Activated B cell treated with CpG ODN at 0.5 μM for 24 hours (primary cell): ENCODE measurements at regions of chr15 and their contacts with region 1.

Region 1: DNA sequence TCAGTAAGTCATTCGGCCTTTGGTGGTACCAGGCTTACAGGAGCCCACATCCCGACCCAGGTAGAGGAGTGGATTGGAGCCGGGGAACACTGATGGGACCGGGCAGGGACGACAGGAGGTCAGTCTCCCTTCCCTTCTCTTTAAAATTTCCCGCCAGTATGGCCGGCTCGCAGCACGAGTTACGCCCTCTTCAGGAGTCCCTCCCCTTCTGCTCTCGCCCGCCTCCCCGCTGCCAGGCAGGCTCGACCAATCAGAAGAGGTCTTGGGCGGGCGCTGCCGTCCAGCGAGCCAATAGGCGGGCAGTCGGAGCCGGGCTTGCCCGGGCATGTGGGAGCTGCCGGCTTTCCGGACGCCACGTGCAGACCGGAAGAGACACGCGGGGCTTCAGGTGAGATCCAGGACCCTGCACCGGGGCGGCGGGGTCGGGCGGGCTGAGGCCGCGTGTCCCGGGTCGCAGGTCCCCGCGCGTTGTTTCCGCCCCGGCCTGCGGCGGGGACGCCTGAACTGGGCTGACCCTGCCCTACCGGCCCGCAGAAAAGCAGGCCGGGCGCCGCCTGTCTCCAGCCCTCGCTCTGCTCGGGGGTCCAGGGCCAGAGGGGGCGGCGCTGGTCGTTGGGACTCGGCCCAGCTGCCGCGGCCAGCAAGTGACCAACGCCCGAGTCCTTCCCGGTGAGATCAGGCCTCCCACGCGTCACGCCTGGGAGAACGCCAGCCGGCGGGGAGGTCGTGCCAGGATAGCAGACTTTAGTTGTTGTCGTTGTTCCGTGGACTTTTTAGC is at the start of gene AEN:
- DNase-seq: peak; percentile 90
- ATAC-seq: peak; percentile 94
- H3K4me3 Mint-ChIP-seq: peak within 1 kb of the TSS; percentile 87
- H3K27ac Mint-ChIP-seq: peak within 1 kb of the TSS; percentile 92
- H3K4me1 Mint-ChIP-seq: peaks cover 50% of the 10 kb centered on the region
- H3K27me3 Mint-ChIP-seq: peaks cover 2% of the 10 kb centered on the region
- CTCF ChIP-seq: no peak
- total RNA-seq, gene AEN: 40.1 and 41.9 TPM in 2 replicates

Region 2: DNA sequence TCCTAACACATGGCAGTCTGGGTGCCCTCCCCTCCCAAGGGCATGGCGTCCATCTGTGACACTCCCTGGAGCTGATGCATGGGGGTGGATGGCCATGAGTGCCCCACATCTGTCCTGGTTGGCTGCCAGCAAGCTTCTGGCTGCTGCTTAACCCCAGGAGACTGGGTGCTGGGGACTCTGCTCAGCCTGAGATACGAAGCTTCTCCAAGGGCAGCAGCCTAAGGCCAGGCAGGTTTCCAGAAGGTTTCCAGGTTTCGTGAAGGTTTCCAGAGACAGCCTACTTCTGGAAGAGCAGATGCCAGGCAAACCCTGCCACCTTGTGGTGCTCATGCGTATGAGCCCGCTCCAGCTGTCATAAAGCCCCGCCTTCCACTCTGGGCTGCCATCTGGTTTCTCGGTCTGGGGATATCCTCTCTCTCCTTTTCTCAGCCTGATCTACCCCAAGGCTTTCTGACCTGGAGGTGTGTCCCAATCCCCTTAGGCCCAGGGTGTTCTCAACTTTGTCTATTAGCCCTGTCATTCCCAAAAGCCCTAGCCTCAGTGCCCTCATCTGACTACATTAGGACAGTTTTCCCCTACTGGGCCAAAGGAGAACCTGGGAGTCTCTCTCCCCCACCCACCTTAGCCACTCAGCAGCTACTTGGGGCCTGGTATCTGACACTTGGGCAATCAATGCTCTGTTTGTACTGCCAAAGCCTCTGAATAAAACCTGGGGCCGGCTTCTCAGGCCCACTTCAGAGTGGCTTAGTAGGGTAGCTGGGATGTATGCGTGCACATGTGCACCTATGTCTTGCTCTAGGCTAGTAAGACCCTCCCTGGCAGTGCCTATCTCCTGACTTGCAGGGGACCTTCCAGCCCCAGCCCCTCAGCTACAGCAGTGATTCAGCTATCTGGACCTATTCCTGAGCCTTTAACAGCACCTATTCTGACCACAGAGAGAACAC is 166.0 kb before region 1 on chr15:
- CTCF ChIA-PET with region 1: no interaction called
- POLR2A ChIA-PET with region 1: no interaction called
- intact Hi-C with region 1: no loop called
- DNase-seq: no peak
- ATAC-seq: peak; percentile 83
- H3K4me3 Mint-ChIP-seq: no peak overlapping the region
- H3K27ac Mint-ChIP-seq: no peak overlapping the region
- H3K4me1 Mint-ChIP-seq: peaks cover 2% of the 10 kb centered on the region
- H3K27me3 Mint-ChIP-seq: peaks cover 2% of the 10 kb centered on the region
- CTCF ChIP-seq: no peak

Region 3: DNA sequence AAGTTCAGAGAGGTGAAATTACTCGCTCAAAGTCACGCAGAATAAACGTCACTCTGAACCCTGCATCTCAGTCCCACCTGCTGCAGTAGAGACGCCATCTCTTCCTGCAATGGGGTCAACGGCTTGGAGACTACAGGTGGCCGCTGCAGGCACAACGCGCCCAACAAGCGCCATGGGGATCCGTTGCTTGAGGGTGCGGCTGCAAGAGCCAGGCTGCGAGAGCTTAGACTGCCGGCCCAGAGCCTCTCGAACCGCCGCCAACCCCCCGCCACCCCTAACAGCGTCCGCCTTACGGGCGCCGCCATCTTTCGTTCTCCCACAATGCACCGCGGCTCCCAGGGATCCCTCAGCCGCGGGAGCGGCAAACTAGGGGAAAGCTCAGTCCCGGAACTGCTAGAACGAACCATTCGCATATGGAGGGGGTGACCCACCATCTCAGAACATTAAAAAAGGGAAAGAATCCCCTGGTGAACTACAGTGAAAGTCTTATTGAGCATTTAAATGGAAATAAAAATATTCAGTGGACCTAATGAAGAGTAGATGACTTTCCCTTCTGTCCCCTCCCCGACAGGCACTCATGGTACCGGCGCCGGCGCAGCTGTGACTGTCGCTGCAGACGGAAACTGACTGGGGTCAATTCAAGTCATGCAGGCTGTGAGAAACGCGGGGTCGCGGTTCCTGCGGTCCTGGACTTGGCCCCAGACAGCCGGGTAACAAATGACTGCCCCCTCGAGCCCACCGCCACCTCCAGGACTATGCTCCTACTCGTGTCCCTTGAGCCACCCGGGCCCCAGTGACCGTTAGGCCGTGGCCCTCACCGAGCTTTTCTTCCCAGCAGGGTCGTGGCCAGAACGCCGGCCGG is 153.9 kb before region 1 on chr15 and contains the starts of genes MRPL46 and MRPS11:
- CTCF ChIA-PET with region 1: no interaction called
- POLR2A ChIA-PET with region 1: interaction called, 14 read pairs
- intact Hi-C with region 1: loop called (anchors 2 kb)
- DNase-seq: peak; percentile 82
- ATAC-seq: peak; percentile 91
- H3K4me3 Mint-ChIP-seq: peak within 1 kb of the TSS; percentile 96
- H3K27ac Mint-ChIP-seq: peak within 1 kb of the TSS; percentile 99
- H3K4me1 Mint-ChIP-seq: peaks cover 36% of the 10 kb centered on the region
- H3K27me3 Mint-ChIP-seq: no peaks in the 10 kb centered on the region
- CTCF ChIP-seq: no peak
- total RNA-seq, gene MRPL46: 29.6 and 31.2 TPM in 2 replicates
- total RNA-seq, gene MRPS11: 44.7 and 47.0 TPM in 2 replicates

Region 4: DNA sequence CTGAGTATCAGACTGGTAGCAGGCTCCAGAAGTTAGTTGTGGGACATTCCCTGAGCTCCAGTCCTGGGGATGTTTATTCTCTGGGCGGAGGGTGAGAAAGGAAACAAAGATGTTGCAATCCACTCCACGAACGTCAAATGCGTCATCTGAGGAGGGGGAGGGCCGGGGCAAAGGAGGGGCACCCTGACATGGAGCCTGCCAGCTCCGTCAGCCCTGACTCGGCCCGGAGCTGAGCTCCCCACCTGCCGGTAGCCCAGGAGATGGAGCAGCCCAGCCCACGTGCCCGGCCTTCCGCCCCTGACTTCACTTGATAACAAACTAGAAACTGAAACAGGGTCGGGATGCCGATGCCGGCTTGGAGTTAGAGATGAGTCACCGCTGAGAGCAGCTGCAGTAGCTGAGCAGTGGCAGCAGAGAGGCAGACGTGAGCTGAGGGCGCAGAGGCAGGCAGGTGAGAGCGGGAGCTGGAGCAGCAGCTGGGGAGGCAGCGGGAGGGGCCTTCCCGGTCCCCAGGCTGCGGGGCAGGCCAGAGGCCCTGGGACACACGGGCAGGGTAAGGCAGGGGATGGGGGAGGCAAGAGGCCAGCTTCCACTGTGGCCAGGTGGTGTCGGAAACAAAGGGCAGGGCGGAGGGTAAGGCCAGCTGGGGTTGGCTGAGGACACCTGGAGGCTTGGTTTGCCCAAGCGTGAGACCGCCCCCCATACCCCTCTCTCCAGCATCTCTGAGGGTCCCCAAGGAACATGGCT is 17.6 kb after region 1 on chr15 and contains the start of gene ISG20:
- CTCF ChIA-PET with region 1: interaction called, 14 read pairs
- POLR2A ChIA-PET with region 1: interaction called, 19 read pairs
- intact Hi-C with region 1: loop called (anchors 1 kb)
- DNase-seq: peak; percentile 82
- ATAC-seq: peak; percentile 70
- H3K4me3 Mint-ChIP-seq: peak within 1 kb of the TSS; percentile 91
- H3K27ac Mint-ChIP-seq: peak within 1 kb of the TSS; percentile 97
- H3K4me1 Mint-ChIP-seq: peaks cover 90% of the 10 kb centered on the region
- H3K27me3 Mint-ChIP-seq: no peaks in the 10 kb centered on the region
- CTCF ChIP-seq: no peak
- total RNA-seq, gene ISG20: 84.6 and 87.1 TPM in 2 replicates

Region 5: DNA sequence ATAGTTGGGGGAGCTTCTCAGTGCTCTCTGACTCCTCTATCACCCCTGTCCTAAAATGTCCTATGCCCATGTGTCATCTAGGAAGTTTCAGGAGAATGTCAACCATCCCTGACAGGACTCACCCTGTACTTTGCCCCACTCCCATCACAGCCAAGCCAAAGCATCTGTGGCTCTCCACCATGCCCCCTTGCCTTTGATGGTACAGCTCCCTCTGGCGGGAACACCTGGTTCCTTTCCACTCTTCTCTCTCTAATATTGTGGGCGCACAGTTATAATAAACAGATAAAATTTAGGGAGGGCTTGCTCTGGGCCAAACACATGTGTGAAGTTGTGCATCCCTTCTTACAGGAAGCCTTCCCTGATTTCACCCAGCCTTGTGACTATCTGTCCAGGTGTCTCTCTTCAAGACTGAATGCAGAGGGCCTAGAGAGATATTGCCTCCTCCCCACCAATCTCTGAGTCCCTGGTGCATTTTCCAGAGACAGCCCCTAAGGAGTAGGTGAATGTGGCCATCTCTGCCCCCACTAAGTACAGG is 80.4 kb after region 1 on chr15:
- CTCF ChIA-PET with region 1: interaction called, 7 read pairs
- POLR2A ChIA-PET with region 1: interaction called, 3 read pairs
- intact Hi-C with region 1: loop called (anchors 1 kb)
- DNase-seq: no peak
- ATAC-seq: no peak
- H3K4me3 Mint-ChIP-seq: no peak overlapping the region
- H3K27ac Mint-ChIP-seq: no peak overlapping the region
- H3K4me1 Mint-ChIP-seq: peaks cover 13% of the 10 kb centered on the region
- H3K27me3 Mint-ChIP-seq: peaks cover 20% of the 10 kb centered on the region
- CTCF ChIP-seq: no peak

Region 6: DNA sequence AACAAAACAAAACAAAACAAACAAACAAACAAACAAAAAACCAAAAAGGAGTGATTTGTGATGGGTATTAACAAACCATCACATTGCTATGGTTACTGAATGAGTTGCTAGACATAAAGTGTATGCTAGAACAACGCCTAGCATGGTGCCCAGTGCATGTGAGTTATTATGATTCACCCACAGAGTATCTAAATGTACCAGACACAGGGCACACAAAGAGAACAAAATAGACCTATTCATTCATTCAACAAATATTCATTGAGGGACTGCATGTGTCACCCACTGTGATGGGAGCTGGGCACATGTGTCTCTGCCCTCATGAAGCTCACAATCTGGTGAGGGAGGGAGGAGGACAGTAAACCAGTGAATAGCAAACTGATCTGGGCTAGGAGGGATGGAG is 170.5 kb after region 1 on chr15:
- CTCF ChIA-PET with region 1: no interaction called
- POLR2A ChIA-PET with region 1: no interaction called
- intact Hi-C with region 1: no loop called
- DNase-seq: no peak
- ATAC-seq: no peak
- H3K4me3 Mint-ChIP-seq: no peak overlapping the region
- H3K27ac Mint-ChIP-seq: no peak overlapping the region
- H3K4me1 Mint-ChIP-seq: no peaks in the 10 kb centered on the region
- H3K27me3 Mint-ChIP-seq: peaks cover 34% of the 10 kb centered on the region
- CTCF ChIP-seq: no peak

Region 7: GRCh38 chr15:88887068-88887580 is 265.9 kb after region 1 on chr15:
- CTCF ChIA-PET with region 1: no interaction called
- POLR2A ChIA-PET with region 1: no interaction called
- intact Hi-C with region 1: no loop called
- DNase-seq: no peak
- ATAC-seq: no peak
- H3K4me3 Mint-ChIP-seq: no peak overlapping the region
- H3K27ac Mint-ChIP-seq: no peak overlapping the region
- H3K4me1 Mint-ChIP-seq: no peaks in the 10 kb centered on the region
- H3K27me3 Mint-ChIP-seq: no peaks in the 10 kb centered on the region
- CTCF ChIP-seq: no peak

Region 8: DNA sequence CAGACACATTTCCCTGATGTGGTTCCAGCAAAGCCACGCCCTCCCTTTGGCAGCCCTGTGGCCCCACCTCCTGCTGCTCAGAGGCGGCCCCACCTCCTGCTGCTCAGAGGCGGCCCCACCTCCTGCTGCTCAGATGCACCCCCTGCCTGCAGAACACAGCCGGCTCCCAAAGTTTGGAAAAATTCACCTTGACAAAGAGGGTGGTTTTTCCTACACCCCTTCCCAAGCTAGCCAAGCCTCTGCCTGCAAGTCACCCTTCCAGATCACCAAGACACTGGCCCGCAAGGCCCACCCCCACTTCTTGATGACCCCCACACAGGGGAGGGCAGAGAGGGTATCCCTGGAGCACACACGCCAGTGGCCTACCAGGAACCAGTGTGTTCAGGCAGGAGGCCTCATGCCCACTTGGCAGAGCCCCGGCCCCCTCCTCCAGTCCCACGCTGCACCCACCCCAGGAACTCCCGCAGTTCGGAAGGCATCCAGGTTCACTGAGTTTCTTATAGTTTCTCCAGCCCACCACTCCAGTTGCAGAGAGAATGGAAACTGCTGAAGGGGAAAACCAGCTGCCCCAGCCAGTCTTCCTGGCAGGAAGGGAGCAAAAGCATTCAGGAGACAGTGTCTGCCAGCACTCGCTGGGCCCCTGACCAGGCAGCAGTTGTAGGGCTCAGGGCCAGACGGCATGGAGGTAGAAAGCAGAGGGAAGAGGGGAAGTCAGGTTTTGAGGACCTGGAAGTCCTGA is 276.4 kb after region 1 on chr15:
- CTCF ChIA-PET with region 1: interaction called, 5 read pairs
- POLR2A ChIA-PET with region 1: no interaction called
- intact Hi-C with region 1: loop called (anchors 2 kb)
- DNase-seq: no peak
- ATAC-seq: peak; percentile 74
- H3K4me3 Mint-ChIP-seq: no peak overlapping the region
- H3K27ac Mint-ChIP-seq: no peak overlapping the region
- H3K4me1 Mint-ChIP-seq: peaks cover 16% of the 10 kb centered on the region
- H3K27me3 Mint-ChIP-seq: peaks cover 6% of the 10 kb centered on the region
- CTCF ChIP-seq: no peak

Region 9: GRCh38 chr15:89087830-89088604 is 466.8 kb after region 1 on chr15 and contains the start of gene ABHD2:
- CTCF ChIA-PET with region 1: no interaction called
- POLR2A ChIA-PET with region 1: no interaction called
- intact Hi-C with region 1: loop called (anchors 1 kb)
- DNase-seq: peak; percentile 98
- ATAC-seq: peak; percentile 97
- H3K4me3 Mint-ChIP-seq: no peak within 1 kb of the TSS
- H3K27ac Mint-ChIP-seq: no peak within 1 kb of the TSS
- H3K4me1 Mint-ChIP-seq: peaks cover 33% of the 10 kb centered on the region
- H3K27me3 Mint-ChIP-seq: no peaks in the 10 kb centered on the region
- CTCF ChIP-seq: no peak
- total RNA-seq, gene ABHD2: 40.7 and 48.8 TPM in 2 replicates

Region 10: GRCh38 chr15:89334510-89335288 is 713.5 kb after region 1 on chr15 and contains the start of gene POLG:
- CTCF ChIA-PET with region 1: no interaction called
- POLR2A ChIA-PET with region 1: no interaction called
- intact Hi-C with region 1: loop called (anchors 10 kb)
- DNase-seq: peak; percentile 97
- ATAC-seq: peak; percentile 92
- H3K4me3 Mint-ChIP-seq: peak within 1 kb of the TSS; percentile 88
- H3K27ac Mint-ChIP-seq: peak within 1 kb of the TSS; percentile 99
- H3K4me1 Mint-ChIP-seq: peaks cover 44% of the 10 kb centered on the region
- H3K27me3 Mint-ChIP-seq: peaks cover 2% of the 10 kb centered on the region
- CTCF ChIP-seq: no peak
- total RNA-seq, gene POLG: 116 and 144 TPM in 2 replicates